Activated CD4-positive, alpha-beta memory T cell treated with anti-CD3 and anti-CD28 coated beads, Interleukin-2, amount 10 ng/mL, durations not matched to agents 7 days and 5 days (primary cell): ENCODE measurements at regions of chr19 and their contacts with region 1.

Region 1: GRCh38 chr19:14031719-14032480 is at the start of gene IL27RA:
- DNase-seq: peak; percentile 87
- H3K4me3 Mint-ChIP-seq: peak within 1 kb of the TSS; percentile 93
- H3K27ac Mint-ChIP-seq: peak within 1 kb of the TSS; percentile 82
- H3K4me1 Mint-ChIP-seq: peaks cover 25% of the 10 kb centered on the region
- H3K27me3 Mint-ChIP-seq: peaks cover 5% of the 10 kb centered on the region
- total RNA-seq, gene IL27RA: 55.5 to 58.1 TPM

Region 2: GRCh38 chr19:13952154-13953035 is 79.5 kb before region 1 on chr19 and contains the start of gene DCAF15:
- CTCF ChIA-PET with region 1: interaction called, 4 read pairs
- POLR2A ChIA-PET with region 1: interaction called, 38 read pairs
- DNase-seq: peak; percentile 99
- H3K4me3 Mint-ChIP-seq: peak within 1 kb of the TSS; percentile 95
- H3K27ac Mint-ChIP-seq: peak within 1 kb of the TSS; percentile 85
- H3K4me1 Mint-ChIP-seq: peaks cover 19% of the 10 kb centered on the region
- H3K27me3 Mint-ChIP-seq: no peaks in the 10 kb centered on the region
- total RNA-seq, gene DCAF15: 76.2 to 78.4 TPM

Region 3: GRCh38 chr19:13986348-13986904 is 45.5 kb before region 1 on chr19:
- CTCF ChIA-PET with region 1: interaction called, 4 read pairs
- POLR2A ChIA-PET with region 1: interaction called, 35 read pairs
- DNase-seq: peak; percentile 99
- H3K4me3 Mint-ChIP-seq: peak overlapping the region; percentile 59
- H3K27ac Mint-ChIP-seq: peak overlapping the region; percentile 98
- H3K4me1 Mint-ChIP-seq: peaks cover 77% of the 10 kb centered on the region
- H3K27me3 Mint-ChIP-seq: no peaks in the 10 kb centered on the region

Region 4: GRCh38 chr19:14006243-14006765 is 25.6 kb before region 1 on chr19 and contains the start of gene RFX1:
- CTCF ChIA-PET with region 1: interaction called, 7 read pairs
- POLR2A ChIA-PET with region 1: interaction called, 49 read pairs
- DNase-seq: peak; percentile 100
- H3K4me3 Mint-ChIP-seq: peak within 1 kb of the TSS; percentile 84
- H3K27ac Mint-ChIP-seq: peak within 1 kb of the TSS; percentile 93
- H3K4me1 Mint-ChIP-seq: peaks cover 41% of the 10 kb centered on the region
- H3K27me3 Mint-ChIP-seq: no peaks in the 10 kb centered on the region
- total RNA-seq, gene RFX1: 16.8 to 18.6 TPM

Region 5: DNA sequence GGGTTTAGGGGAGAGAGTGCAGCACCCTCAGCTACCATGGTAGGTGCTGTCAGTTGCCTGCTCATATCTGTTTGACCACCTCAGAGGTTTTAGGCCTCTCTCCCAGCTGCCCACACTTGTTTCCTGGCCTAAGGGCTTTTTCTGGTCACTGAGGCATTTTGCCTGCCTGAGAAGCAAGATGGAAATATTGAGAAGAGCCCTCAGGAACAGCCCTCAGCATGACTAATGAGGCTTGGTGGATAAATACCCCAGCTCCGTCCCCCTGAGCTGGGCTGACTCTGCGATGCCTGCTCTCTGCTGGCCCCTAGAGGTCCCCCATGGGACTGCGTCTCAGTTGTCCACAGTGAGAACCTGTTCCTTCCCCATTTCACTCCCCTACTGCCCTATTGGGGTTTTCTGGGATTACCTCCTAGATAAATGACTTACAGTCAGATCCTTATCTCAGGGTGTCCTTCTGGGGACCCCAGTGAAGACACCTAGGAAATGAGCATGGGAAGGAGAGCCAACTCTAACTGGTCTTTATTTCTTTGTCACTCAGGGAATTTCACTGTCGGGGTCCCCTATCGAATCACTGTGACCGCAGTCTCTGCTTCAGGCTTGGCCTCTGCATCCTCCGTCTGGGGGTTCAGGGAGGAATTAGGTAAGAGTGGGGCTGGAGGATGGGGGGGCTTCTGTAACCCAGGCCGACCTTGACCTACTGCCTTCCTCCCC is 16.7 kb after region 1 on chr19:
- CTCF ChIA-PET with region 1: interaction called, 17 read pairs
- POLR2A ChIA-PET with region 1: interaction called, 4 read pairs
- DNase-seq: peak; percentile 75
- H3K4me3 Mint-ChIP-seq: no peak overlapping the region
- H3K27ac Mint-ChIP-seq: no peak overlapping the region
- H3K4me1 Mint-ChIP-seq: peaks cover 2% of the 10 kb centered on the region
- H3K27me3 Mint-ChIP-seq: no peaks in the 10 kb centered on the region

Region 6: GRCh38 chr19:14073261-14073924 is 41.5 kb after region 1 on chr19:
- CTCF ChIA-PET with region 1: interaction called, 10 read pairs
- POLR2A ChIA-PET with region 1: interaction called, 6 read pairs
- DNase-seq: peak; percentile 78
- H3K4me3 Mint-ChIP-seq: peak overlapping the region; percentile 81
- H3K27ac Mint-ChIP-seq: peak overlapping the region; percentile 73
- H3K4me1 Mint-ChIP-seq: peaks cover 26% of the 10 kb centered on the region
- H3K27me3 Mint-ChIP-seq: peaks cover 2% of the 10 kb centered on the region